ENCODE measurements at regions of chr5 and their contacts with region 1.

Region 1: GRCh38 chr5:88680253-88681132 is 202.5 kb downstream of the MEF2C start:
- DNase-seq: peak; percentile 89
- CTCF ChIP-seq: peak; percentile 97

Region 2: GRCh38 chr5:87780831-87781760 is 899.4 kb before region 1 on chr5:
- in situ Hi-C with region 1: loop called (anchors 10 kb)
- DNase-seq: peak; percentile 37
- CTCF ChIP-seq: peak; percentile 75

Region 3: GRCh38 chr5:88140856-88141752 is 539.4 kb before region 1 on chr5:
- in situ Hi-C with region 1: loop called (anchors 10 kb)
- DNase-seq: peak; percentile 88
- CTCF ChIP-seq: peak; percentile 60

Region 4: DNA sequence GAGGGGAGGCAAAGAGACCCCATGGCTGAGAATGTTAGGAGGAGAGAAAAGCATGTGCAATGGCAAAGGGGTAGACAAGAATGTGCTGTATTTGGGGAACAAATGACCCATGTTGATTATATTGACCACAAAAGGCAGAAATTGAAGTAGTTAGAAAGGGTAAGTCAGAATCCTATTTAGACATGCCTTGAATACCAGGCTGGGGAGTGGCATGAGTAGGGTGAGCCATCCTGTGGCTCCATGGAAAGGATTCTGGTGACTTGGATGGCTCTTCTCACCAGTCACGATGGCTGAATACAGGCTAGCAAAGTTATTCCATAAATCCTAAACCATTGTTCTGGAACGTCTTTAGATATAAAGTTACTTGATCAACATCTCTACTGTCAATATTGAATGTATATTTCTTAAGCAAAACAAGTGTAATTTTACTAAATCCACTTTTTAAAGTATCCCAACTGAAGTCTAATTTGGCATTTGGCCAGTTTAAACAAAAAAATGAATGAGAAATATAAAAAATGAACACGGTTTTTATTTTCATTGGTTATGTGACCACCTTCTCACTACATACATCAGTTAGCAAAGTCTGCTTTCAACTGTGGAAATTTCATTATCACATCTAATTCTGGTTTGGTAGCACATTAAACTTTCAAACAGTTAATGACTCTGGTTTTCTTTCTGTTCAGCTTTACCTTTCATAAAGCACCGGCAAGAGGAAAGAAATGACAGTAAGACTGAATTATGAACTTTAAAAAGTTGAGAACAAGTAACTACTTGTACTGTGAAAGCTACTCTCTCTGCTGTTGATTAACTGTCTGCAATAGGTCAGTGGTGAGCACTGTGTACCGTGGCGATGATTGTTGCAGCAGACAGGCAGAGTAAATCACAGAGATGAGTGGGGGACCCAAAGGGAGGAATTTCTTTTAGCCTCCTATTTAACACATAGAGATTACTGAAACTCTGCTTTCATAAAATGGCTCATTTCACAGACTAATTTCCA is 276.2 kb after region 1 on chr5:
- in situ Hi-C with region 1: no loop called
- DNase-seq: no peak
- CTCF ChIP-seq: no peak